ENCODE measurements at regions of chr14 and their contacts with region 1.

Region 1: DNA sequence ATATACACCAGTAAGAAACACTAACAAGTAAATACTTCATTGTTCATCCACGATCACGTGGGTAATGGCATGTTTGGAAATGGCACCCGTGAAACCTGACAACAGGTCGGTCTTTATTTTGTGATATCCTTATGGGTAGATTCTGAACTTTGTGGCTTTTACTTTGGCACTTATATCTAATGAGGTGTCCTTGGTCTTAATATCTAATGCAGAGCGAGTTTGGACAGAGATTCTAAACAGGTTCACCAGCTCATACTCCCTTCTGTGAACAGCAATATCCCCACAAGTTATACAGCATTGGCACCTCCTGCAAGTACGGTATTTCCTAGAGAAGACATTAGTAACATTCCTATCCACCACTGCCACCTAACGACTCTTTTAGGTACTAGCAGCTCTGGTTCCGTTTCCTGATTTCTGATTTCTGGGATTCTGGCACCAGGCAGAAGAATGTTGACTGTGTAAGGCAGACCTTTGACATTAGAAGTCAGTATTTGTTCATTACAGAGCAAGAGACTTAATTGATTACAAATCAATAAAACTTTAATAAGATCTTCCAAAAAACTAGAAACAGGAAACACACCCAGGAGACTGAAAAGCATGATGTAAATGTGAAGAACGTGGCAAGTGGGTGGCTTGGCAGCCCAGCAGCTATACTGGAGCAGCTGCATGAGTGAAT is 2.4 kb downstream of the ANG start:
- DNase-seq: no peak
- H3K4me3 ChIP-seq: no peak overlapping the region
- H3K27ac ChIP-seq: no peak overlapping the region
- H3K4me1 ChIP-seq: peaks cover 16 to 41% (median 36%) of the 10 kb centered on the region in 4 donors
- H3K27me3 ChIP-seq: no peaks in the 10 kb centered on the region
- CTCF ChIP-seq: peak; percentile 83 to 95 (median 88)
- EP300 ChIP-seq: no peak
- POLR2A ChIP-seq: no peak

Region 2: GRCh38 chr14:20530771-20531571 is 160.0 kb before region 1 on chr14:
- intact Hi-C with region 1: loop called (anchors 1 kb)
- DNase-seq: peak; percentile 93
- H3K4me3 ChIP-seq: no peak overlapping the region
- H3K27ac ChIP-seq: no peak overlapping the region
- H3K4me1 ChIP-seq: peaks cover 0 to 5% (median 0%) of the 10 kb centered on the region in 4 donors
- H3K27me3 ChIP-seq: peaks cover 0 to 14% (median 0%) of the 10 kb centered on the region in 4 donors
- CTCF ChIP-seq: peak; percentile 43 to 70 (median 64)
- EP300 ChIP-seq: no peak
- POLR2A ChIP-seq: no peak

Measured in esophagus muscularis mucosa (tissue), 4 donors.